Activated B cell treated with CpG ODN at 0.5 μM for 24 hours (primary cell): ENCODE measurements at regions of chrX and their contacts with region 1.

Region 1: DNA sequence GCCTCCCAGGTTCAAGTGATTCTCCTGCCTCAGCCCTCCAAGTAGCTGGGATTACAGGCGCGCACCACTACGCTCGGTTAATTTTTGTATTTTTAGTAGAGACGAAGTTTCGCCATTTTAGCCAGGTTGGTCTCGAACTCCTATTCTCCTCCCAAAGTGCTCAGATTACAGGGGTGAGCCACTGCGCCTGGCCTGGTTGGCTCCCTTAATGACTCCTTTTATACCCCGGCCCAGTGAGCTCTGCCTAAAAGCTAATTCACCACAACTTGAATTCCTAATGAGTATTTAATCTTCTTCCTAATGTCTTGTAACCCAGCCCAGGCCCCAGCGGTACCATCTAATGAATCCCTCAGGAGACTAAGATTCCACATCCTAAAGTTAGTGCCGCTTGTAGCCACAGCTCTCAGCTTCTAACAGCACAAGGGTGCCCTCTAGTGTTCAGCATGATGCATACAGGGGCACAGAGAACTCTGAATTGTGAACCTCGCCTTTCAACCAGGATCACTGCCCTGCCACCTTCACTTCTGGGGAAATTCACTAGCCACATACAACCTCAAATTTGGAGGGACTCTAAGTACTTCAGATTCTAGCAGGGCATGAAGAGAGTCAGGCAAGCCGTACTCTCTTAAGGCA is 89.5 kb downstream of the OR13H1 start:
- DNase-seq: no peak
- ATAC-seq: peak; percentile 31
- H3K4me3 Mint-ChIP-seq: no peak overlapping the region
- H3K27ac Mint-ChIP-seq: no peak overlapping the region
- H3K4me1 Mint-ChIP-seq: no peaks in the 10 kb centered on the region
- H3K27me3 Mint-ChIP-seq: no peaks in the 10 kb centered on the region
- CTCF ChIP-seq: no peak

Region 2: DNA sequence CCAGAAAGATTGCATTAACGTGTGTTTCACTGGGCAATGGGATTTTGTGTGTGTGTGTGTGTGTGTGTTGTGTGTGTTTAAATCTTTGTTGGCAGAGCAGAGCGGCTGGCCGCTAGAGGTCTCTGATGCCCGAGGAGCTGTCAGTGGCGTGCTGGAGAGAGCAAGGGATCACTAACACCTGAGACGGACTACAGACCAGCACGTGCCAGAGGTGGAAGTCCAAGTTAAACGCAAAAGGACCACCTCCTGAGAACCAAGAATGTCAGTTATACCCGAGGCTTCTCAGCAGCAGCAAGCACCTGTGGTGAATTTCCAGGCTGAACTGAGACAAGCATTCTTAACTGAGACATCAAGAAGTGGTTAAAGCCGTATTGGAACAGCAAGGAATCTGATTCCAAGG is 1302.7 kb before region 1 on chrX:
- CTCF ChIA-PET with region 1: interaction called, 3 read pairs
- POLR2A ChIA-PET with region 1: no interaction called
- intact Hi-C with region 1: loop called (anchors 2 kb)
- DNase-seq: peak; percentile 15
- ATAC-seq: peak; percentile 25
- H3K4me3 Mint-ChIP-seq: no peak overlapping the region
- H3K27ac Mint-ChIP-seq: no peak overlapping the region
- H3K4me1 Mint-ChIP-seq: no peaks in the 10 kb centered on the region
- H3K27me3 Mint-ChIP-seq: peaks cover 5% of the 10 kb centered on the region
- CTCF ChIP-seq: no peak

Region 3: DNA sequence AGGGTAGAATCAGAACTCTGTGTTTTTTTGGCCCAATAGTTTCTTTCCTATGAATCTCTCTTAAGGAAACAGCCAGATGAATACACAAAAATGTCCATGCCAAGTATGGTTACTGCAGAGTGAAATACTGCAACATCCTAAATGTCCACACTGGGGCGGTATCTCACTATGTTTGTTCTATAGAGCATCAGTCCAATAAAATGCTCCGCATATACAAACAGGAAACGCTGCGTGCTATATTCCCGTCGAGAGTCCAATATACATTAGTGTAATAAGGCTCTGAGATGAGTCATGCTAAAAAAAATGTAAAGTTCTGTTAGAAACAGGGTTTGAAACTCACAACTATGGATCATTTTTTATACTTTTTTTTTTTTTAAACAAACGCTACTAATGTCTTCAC is 657.5 kb before region 1 on chrX:
- CTCF ChIA-PET with region 1: no interaction called
- POLR2A ChIA-PET with region 1: no interaction called
- intact Hi-C with region 1: loop called (anchors 2 kb)
- DNase-seq: no peak
- ATAC-seq: no peak
- H3K4me3 Mint-ChIP-seq: no peak overlapping the region
- H3K27ac Mint-ChIP-seq: no peak overlapping the region
- H3K4me1 Mint-ChIP-seq: no peaks in the 10 kb centered on the region
- H3K27me3 Mint-ChIP-seq: peaks cover 2% of the 10 kb centered on the region
- CTCF ChIP-seq: no peak

Region 4: DNA sequence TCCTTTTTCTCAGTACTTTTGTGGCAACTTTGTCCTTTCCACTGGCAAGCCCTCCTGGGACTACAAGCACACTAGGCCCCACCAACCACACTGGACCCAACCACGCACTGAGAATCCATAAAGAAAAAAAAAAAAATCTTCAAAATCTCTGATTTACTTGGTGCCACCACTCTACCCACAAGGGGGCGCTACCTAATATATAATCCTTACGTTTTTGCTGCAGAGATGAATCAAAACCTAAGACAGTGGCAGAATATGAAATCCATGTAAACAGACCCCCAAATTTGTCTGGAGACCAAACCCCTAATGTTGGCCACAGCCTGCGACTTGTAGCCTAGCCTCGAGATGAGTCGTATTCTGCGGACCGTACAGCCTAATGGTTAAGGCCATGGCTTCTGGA is 638.7 kb before region 1 on chrX:
- CTCF ChIA-PET with region 1: no interaction called
- POLR2A ChIA-PET with region 1: no interaction called
- intact Hi-C with region 1: loop called (anchors 5 kb)
- DNase-seq: no peak
- ATAC-seq: no peak
- H3K4me3 Mint-ChIP-seq: no peak overlapping the region
- H3K27ac Mint-ChIP-seq: no peak overlapping the region
- H3K4me1 Mint-ChIP-seq: no peaks in the 10 kb centered on the region
- H3K27me3 Mint-ChIP-seq: peaks cover 1% of the 10 kb centered on the region
- CTCF ChIP-seq: no peak

Region 5: DNA sequence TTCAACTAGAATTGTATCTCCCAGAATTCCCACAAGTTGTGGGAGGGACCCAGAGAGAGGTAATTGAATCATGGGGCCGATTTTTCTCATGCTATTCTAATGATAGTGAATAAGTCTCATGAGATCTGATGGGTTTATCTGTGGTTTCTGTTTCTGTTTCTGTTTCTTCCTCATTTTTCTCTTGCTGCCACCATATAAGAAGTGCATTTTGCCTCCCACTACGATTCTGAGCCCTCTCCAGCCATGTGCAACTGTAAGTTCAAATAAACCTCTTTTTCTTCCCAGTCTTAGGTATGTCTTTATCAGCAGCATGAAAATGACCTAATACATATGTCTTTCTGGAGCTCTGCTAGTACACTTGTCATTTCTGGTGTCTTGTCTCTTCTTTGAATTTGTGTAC is 111.6 kb before region 1 on chrX:
- CTCF ChIA-PET with region 1: no interaction called
- POLR2A ChIA-PET with region 1: no interaction called
- intact Hi-C with region 1: no loop called
- DNase-seq: no peak
- ATAC-seq: no peak
- H3K4me3 Mint-ChIP-seq: no peak overlapping the region
- H3K27ac Mint-ChIP-seq: no peak overlapping the region
- H3K4me1 Mint-ChIP-seq: no peaks in the 10 kb centered on the region
- H3K27me3 Mint-ChIP-seq: no peaks in the 10 kb centered on the region
- CTCF ChIP-seq: no peak